ENCODE measurements at regions of chr14 and their contacts with region 1.

Region 1: GRCh38 chr14:95683793-95684192 is 2.4 kb upstream of the TCL1B start:
- DNase-seq: peak; percentile 33
- H3K4me3 Mint-ChIP-seq: no peak overlapping the region
- H3K27ac Mint-ChIP-seq: no peak overlapping the region
- H3K4me1 Mint-ChIP-seq: no peaks in the 10 kb centered on the region
- H3K27me3 Mint-ChIP-seq: peaks cover 13% of the 10 kb centered on the region

Region 2: GRCh38 chr14:95561001-95561412 is 122.8 kb before region 1 on chr14:
- CTCF ChIA-PET with region 1: interaction called, 10 read pairs
- POLR2A ChIA-PET with region 1: no interaction called
- DNase-seq: peak; percentile 86
- H3K4me3 Mint-ChIP-seq: no peak overlapping the region
- H3K27ac Mint-ChIP-seq: no peak overlapping the region
- H3K4me1 Mint-ChIP-seq: peaks cover 2% of the 10 kb centered on the region
- H3K27me3 Mint-ChIP-seq: peaks cover 5% of the 10 kb centered on the region

Region 3: GRCh38 chr14:95713596-95714371 is 30.0 kb after region 1 on chr14 and contains the start of gene TCL1A:
- CTCF ChIA-PET with region 1: no interaction called
- POLR2A ChIA-PET with region 1: no interaction called
- DNase-seq: no peak
- H3K4me3 Mint-ChIP-seq: no peak within 1 kb of the TSS
- H3K27ac Mint-ChIP-seq: no peak within 1 kb of the TSS
- H3K4me1 Mint-ChIP-seq: no peaks in the 10 kb centered on the region
- H3K27me3 Mint-ChIP-seq: peaks cover 12% of the 10 kb centered on the region
- total RNA-seq, gene TCL1A: not detected

Region 4: GRCh38 chr14:95770777-95771176 is 87.0 kb after region 1 on chr14:
- CTCF ChIA-PET with region 1: no interaction called
- POLR2A ChIA-PET with region 1: no interaction called
- DNase-seq: no peak
- H3K4me3 Mint-ChIP-seq: no peak overlapping the region
- H3K27ac Mint-ChIP-seq: no peak overlapping the region
- H3K4me1 Mint-ChIP-seq: no peaks in the 10 kb centered on the region
- H3K27me3 Mint-ChIP-seq: peaks cover 11% of the 10 kb centered on the region